ENCODE measurements at regions of chr17 and their contacts with region 1.

Region 1: DNA sequence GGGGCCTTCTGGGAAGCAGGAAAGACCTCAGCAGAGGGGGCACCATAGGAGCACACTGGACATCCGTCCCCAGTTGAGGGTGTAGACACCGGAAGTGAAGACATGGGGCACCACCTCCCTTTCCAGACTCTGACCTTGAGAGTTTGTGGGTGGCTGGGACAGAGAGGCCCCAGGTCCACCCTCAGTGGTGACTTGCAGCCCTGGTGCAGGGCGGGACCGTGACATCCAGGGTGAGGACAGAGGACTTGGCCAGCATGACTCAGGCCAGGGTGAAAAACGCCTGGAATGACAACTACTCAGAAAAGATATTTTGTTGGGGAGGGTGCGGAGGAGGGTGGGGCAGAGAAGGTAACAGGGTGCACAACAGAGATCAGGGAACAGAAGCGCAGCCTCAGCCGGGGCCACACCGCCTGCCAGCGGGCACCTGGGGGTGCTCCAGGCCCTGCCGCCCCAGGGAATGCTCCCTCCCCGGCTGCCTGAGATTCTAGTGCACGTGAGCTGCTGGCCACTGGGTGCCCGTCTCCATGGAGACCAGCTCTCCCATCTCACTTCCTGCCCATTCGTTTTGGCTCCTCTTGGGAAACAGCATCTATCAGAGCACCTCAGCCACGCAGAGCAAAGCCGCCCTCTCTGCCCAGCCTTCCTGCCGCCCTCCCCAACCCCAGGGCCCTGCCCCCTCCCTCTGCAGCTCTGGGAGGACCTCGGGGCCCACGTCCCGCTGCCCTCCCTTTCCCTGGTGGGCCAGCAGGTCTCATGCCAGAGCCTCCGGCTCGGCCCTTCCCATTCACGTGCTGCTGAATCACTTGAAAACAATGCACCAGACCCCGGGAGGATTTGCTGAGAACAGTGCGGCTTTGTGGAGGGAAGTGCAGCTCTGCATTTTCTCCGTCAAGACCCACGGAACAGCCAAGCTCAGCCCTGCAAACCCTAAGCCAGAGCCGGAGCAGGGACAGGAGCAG is 19.6 kb downstream of the CEP295NL start:
- DNase-seq: peak; percentile 90 to 95
- H3K4me3 ChIP-seq: peak overlapping the region; percentile 36 to 45
- H3K27ac ChIP-seq: peak overlapping the region; percentile 86 to 89
- H3K4me1 ChIP-seq: peaks cover 29 to 91% (median 72%) of the 10 kb centered on the region in 4 donors
- H3K27me3 ChIP-seq: no peaks in the 10 kb centered on the region
- CTCF ChIP-seq: no peak

Region 2: GRCh38 chr17:78828470-78829185 is 54.8 kb before region 1 on chr17:
- intact Hi-C with region 1: no loop called
- DNase-seq: no peak
- H3K4me3 ChIP-seq: no peak overlapping the region
- H3K27ac ChIP-seq: no peak overlapping the region
- H3K4me1 ChIP-seq: no peaks in the 10 kb centered on the region
- H3K27me3 ChIP-seq: no peaks in the 10 kb centered on the region
- CTCF ChIP-seq: no peak

Region 3: GRCh38 chr17:78862073-78863023 is 21.1 kb before region 1 on chr17:
- intact Hi-C with region 1: loop called (anchors 2 kb)
- DNase-seq: peak; percentile 96 to 97
- H3K4me3 ChIP-seq: peak overlapping the region in 1 of 2 donors; percentile 18
- H3K27ac ChIP-seq: peak overlapping the region; percentile 87 to 90
- H3K4me1 ChIP-seq: peaks cover 0 to 64% (median 21%) of the 10 kb centered on the region in 4 donors
- H3K27me3 ChIP-seq: no peaks in the 10 kb centered on the region
- CTCF ChIP-seq: no peak

Region 4: GRCh38 chr17:78923660-78924453 is 40.4 kb after region 1 on chr17:
- intact Hi-C with region 1: loop called (anchors 5 kb)
- DNase-seq: peak; percentile 68 to 85
- H3K4me3 ChIP-seq: peak overlapping the region; percentile 89 to 91
- H3K27ac ChIP-seq: peak overlapping the region; percentile 96 to 98
- H3K4me1 ChIP-seq: peaks cover 0 to 68% (median 56%) of the 10 kb centered on the region in 4 donors
- H3K27me3 ChIP-seq: no peaks in the 10 kb centered on the region
- CTCF ChIP-seq: no peak

Region 5: GRCh38 chr17:78970834-78971773 is 87.7 kb after region 1 on chr17:
- intact Hi-C with region 1: loop called (anchors 5 kb)
- DNase-seq: peak; percentile 84 to 87
- H3K4me3 ChIP-seq: no peak overlapping the region
- H3K27ac ChIP-seq: peak overlapping the region; percentile 15 to 32
- H3K4me1 ChIP-seq: peaks cover 0 to 28% (median 20%) of the 10 kb centered on the region in 4 donors
- H3K27me3 ChIP-seq: no peaks in the 10 kb centered on the region
- CTCF ChIP-seq: peak; percentile 86 to 92

Measured in tibial artery (tissue), 4 donors.